ENCODE measurements at regions of chr20 and their contacts with region 1.

Region 1: GRCh38 chr20:60857708-60858107 is 394.4 kb upstream of the CDH4 start:
- DNase-seq: no peak

Region 2: GRCh38 chr20:60812561-60812960 is 45.1 kb before region 1 on chr20:
- in situ Hi-C with region 1: loop called (anchors 5 kb)
- DNase-seq: no peak

Measured in G401 (cell line).